ENCODE measurements at regions of chr2 and their contacts with region 1.

Region 1: GRCh38 chr2:99559075-99559662 is 69.4 kb upstream of the REV1 start:
- DNase-seq: peak; percentile 79 to 92 (median 87)
- ATAC-seq: peak; percentile 93 to 97 (median 96)
- H3K4me3 ChIP-seq: no peak overlapping the region
- H3K27ac ChIP-seq: no peak overlapping the region
- H3K4me1 ChIP-seq: peaks cover 0 to 5% (median 0%) of the 10 kb centered on the region in 12 donors
- H3K27me3 ChIP-seq: no peaks in the 10 kb centered on the region
- CTCF ChIP-seq: peak; percentile 98 to 100 (median 99)
- POLR2A ChIP-seq: no peak

Region 2: DNA sequence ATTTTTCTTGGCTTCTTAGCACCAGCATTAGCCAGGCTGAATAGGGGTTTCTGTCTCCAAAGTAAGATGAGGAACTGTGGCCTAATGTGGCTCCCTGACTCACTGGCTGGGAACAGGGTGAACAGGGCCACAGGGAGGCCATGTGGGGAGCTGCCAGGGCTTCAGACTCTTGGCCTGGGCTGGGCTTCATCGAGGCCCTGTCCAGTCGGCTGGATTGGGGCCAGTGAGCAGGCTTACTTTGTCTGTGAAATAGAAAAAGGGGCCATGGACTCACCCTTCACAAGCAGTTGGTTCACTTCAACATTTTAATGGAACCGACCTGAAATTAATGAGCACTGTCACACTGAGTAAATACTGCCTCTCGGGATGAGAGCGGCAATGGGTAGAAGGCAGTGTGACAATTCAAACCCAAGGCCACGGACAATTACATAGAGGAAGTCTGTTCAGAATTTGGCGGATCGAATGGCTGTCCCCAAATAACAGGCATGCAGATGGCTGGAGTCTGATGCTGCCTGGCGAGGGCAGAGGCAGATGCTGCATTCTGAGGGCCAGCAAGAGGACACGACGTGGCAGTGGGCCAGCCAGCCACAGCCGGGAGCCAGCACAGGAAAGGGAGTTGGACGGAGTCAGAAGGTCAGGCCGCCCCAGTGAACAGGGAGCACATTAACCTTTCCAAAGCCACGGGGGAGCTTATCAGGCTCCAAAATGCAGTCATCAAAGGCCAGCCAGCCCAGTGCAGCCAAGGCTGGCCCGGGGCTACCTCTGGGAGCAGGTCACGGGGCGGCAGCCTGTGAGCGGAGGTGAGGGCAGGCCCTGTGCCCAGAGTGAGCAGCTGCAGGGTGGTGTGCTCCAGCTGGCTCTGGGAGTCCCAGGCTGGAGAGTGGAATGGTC is 77.2 kb after region 1 on chr2:
- intact Hi-C with region 1: loop called in 1 of 10 experiments (anchors 10 kb)
- DNase-seq: peak; percentile 88 to 95 (median 92)
- ATAC-seq: peak; percentile 94 to 97 (median 96)
- H3K4me3 ChIP-seq: no peak overlapping the region
- H3K27ac ChIP-seq: peak overlapping the region; percentile 27 to 84 (median 68)
- H3K4me1 ChIP-seq: peaks cover 0 to 36% (median 20%) of the 10 kb centered on the region in 12 donors
- H3K27me3 ChIP-seq: no peaks in the 10 kb centered on the region
- CTCF ChIP-seq: peak in 1 of 12 donors; percentile 16
- POLR2A ChIP-seq: no peak

Region 3: DNA sequence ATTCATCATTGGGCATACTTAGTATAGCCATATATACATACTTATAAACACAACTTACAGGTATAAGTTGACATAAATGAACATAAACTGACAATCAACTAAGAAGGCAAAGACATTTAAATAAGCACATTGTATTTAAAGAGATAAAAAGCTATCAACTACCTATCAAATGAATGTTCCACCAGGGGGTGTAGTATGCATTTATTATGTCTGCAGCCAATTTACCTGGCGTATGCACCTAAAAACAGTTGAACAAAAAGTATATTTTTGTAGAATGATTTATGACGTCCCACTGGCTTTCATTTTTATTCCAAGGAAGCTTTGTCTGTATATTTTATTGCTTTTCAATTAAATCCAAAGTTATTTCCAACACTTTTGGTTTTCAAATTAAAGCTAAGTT is 259.7 kb after region 1 on chr2:
- intact Hi-C with region 1: loop called (anchors 5 to 10 kb)
- DNase-seq: no peak
- ATAC-seq: no peak
- H3K4me3 ChIP-seq: no peak overlapping the region
- H3K27ac ChIP-seq: no peak overlapping the region
- H3K4me1 ChIP-seq: no peaks in the 10 kb centered on the region
- H3K27me3 ChIP-seq: no peaks in the 10 kb centered on the region
- CTCF ChIP-seq: peak in 6 of 12 donors; percentile 14 to 34 (median 24)
- POLR2A ChIP-seq: no peak

Region 4: DNA sequence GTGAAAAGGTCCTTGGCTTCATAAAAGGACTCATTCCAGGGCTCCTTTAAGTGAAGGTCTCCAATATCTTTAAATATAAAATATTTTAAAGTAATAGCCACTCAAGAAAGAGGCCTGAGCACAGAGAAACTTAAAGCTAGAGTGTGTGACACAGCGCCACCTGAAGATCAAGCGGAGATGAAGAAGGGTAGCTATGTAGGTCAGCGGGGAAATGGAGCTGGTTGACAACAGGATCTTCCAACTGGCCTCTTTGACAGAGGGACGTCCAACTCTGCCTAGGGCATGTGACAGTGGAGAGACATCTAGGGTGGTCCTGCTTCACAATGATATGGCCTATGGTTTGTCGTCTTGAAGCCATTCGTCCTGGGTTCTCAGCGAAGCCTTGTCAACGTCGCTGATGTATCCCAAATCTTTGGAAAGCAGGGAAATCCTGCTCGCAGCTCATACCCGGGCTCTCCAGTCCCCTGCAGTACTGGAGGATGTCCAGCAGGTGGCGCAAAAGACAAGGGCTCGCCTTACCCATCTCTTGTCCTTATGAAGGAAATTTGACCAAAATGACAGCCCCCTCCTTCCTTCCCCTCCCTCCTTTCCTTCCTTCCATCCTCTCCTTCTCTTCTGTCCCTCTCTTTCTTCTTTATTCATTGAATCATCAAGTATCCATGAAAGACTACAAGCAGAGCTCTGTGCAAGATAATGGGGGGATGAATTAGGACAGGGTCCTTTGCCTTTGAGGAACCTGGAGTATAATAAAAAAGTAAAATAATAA is 703.6 kb after region 1 on chr2:
- intact Hi-C with region 1: loop called in 8 of 10 experiments (anchors 1 to 5 kb)
- DNase-seq: peak; percentile 61 to 80 (median 63)
- ATAC-seq: peak; percentile 35 to 77 (median 52)
- H3K4me3 ChIP-seq: no peak overlapping the region
- H3K27ac ChIP-seq: peak overlapping the region in 1 of 12 donors; percentile 23
- H3K4me1 ChIP-seq: peaks cover 0 to 16% (median 0%) of the 10 kb centered on the region in 12 donors
- H3K27me3 ChIP-seq: no peaks in the 10 kb centered on the region
- CTCF ChIP-seq: peak; percentile 93 to 98 (median 97)
- POLR2A ChIP-seq: no peak

Region 5: GRCh38 chr2:100381240-100381639 is 822.1 kb after region 1 on chr2:
- intact Hi-C with region 1: loop called in 4 of 10 experiments (anchors 5 to 10 kb)
- DNase-seq: peak in 4 of 5 donors; percentile 65 to 75 (median 68)
- ATAC-seq: peak; percentile 47 to 71 (median 58)
- H3K4me3 ChIP-seq: no peak overlapping the region
- H3K27ac ChIP-seq: no peak overlapping the region
- H3K4me1 ChIP-seq: no peaks in the 10 kb centered on the region
- H3K27me3 ChIP-seq: no peaks in the 10 kb centered on the region
- CTCF ChIP-seq: peak; percentile 78 to 92 (median 86)
- POLR2A ChIP-seq: no peak

Measured in heart left ventricle (tissue), 16 donors.